ENCODE measurements at regions of chr12 and their contacts with region 1.

Region 1: GRCh38 chr12:12837025-12837872 is 24.1 kb downstream of the DDX47 start:
- DNase-seq: peak; percentile 83

Region 2: GRCh38 chr12:12983420-12984035 is 146.3 kb after region 1 on chr12:
- intact Hi-C with region 1: loop called in 1 of 2 experiments (anchors 10 kb)
- DNase-seq: no peak